Endothelial cell of umbilical vein (primary cell): ENCODE measurements at regions of chr10 and their contacts with region 1.

Region 1: DNA sequence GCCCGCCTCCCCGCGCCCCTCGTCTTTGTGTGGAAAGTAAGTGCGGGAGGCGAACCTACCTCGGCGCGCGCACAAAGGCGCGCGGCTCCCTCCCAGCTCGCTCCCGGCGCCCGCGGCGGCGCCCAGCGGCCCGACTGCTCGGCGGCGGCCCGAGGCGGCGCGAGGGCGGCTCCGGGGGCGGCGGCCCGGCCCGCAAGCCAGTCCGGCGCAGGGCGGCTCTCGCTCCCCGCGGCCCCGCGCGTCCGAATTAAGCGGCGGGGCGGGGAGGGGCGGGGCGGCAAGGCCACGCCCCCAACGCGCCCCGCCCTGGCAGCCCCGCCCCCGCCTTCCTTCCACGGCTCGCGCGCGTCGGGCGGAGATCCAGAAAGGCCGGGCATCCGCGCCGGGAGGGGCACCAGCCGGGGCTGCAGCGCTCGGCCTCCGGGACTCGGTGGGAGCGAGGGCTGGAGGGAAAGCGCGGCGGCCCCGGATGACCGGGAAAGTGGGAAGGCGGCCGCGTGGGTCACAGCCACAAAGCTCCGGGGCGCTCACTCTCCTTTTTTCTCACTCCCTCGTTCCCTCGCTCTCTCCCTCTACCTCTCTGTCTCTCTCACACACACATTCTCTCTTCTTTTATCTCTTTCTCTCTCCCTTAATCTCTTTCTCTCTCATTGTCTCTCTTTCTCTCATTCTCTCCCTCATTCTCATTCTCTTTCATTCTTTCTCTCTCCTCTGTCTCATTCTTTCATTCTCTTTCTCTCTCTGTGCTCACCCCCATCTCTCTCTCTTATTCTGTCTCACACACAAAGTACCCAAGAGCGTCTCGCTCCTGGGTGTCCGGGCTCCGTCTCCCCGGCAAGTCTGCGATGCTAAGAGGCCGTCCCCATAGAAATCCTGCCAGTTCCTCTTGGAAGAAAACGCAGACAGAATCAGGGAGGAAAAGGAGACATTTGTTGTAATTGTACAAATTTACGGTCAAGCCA is 170.2 kb downstream of the FAM107B start:
- DNase-seq: peak; percentile 71
- H3K4me3 ChIP-seq: peak overlapping the region; percentile 65 to 78 (median 76)
- H3K27ac ChIP-seq: peak overlapping the region; percentile 88
- H3K4me1 ChIP-seq: peaks cover 38% of the 10 kb centered on the region
- H3K27me3 ChIP-seq: no peaks in the 10 kb centered on the region
- CTCF ChIP-seq: no peak
- POLR2A ChIP-seq: peak; percentile 85

Region 2: DNA sequence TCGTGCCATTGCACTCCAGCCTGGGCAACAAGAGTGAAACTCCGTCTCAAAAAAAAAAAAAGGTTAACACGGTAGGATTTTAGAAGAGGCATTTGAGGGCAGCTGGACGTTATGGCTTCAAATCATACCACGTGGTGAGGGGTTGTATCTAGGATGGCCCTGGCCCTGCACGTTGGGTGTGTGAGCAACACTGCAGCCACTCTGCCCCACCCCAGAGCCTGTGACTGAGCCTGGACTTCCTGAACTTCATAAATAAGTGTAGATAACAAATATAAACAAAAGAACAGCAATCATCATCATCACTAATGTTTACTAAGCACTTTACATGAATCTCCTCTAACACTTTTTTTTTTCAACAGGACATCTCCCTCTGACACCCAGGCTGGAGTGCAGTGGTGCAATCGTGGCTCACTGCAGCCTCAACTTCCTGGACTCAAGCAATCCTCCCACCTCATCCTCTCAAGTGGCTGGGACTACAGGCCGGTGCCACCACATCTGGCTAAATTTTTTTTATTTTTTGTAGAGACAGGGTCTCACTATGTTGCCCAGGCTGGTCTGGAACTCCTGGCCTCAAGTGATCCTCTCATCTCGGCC is 104.2 kb before region 1 on chr10:
- CTCF ChIA-PET with region 1: interaction called, 3 read pairs
- POLR2A ChIA-PET with region 1: no interaction called
- dilution Hi-C with region 1: no loop called
- intact Hi-C with region 1: loop called (anchors 5 kb)
- DNase-seq: no peak
- H3K4me3 ChIP-seq: no peak overlapping the region
- H3K27ac ChIP-seq: no peak overlapping the region
- H3K4me1 ChIP-seq: no peaks in the 10 kb centered on the region
- H3K27me3 ChIP-seq: no peaks in the 10 kb centered on the region
- CTCF ChIP-seq: no peak
- POLR2A ChIP-seq: no peak

Region 3: GRCh38 chr10:14556285-14556956 is 48.0 kb before region 1 on chr10:
- CTCF ChIA-PET with region 1: interaction called, 3 read pairs
- POLR2A ChIA-PET with region 1: no interaction called
- dilution Hi-C with region 1: no loop called
- intact Hi-C with region 1: loop called (anchors 5 kb)
- DNase-seq: peak; percentile 59
- H3K4me3 ChIP-seq: no peak overlapping the region
- H3K27ac ChIP-seq: peak overlapping the region; percentile 16
- H3K4me1 ChIP-seq: peaks cover 62% of the 10 kb centered on the region
- H3K27me3 ChIP-seq: no peaks in the 10 kb centered on the region
- CTCF ChIP-seq: peak in 1 of 2 donors; percentile 22
- POLR2A ChIP-seq: peak; percentile 52

Region 4: DNA sequence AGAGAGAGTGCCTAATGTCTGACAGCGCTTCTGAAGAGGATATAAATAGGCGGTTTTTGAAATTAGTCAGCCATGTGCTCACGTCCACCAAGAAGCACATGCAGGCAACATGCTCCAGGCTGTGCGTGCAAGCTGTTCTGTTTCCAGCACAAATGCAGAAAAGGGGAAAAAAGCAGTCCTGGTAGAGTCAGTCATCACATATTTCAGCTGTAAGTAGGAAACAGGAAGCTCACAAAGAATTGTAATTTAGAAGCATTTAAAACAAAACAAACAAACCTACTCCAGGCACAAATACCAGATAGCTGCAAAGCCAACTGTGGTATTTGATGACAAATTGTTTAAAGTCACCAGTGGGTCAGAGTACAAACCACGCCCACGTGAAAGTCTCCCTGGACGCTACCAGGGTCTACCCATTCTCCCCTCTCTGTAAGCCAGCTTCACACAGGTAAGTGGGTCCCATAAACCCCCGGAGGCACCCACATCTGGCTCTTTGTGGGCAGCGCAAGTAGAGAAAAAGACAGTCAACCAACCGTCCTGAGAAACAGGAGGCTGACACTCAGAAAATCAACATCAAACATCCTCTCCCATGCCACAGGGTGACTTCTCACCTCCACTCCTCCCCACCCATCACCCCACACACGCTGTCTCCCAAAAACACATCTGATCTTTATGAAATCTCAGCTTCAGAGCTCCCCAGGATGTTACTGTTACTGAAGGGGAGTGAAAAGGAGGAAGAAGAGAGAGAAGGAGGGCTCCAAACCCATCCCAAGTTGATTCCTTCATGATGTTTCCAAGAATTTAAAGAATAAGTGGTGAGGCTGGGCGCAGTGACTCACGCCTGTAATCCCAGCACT is 16.2 kb before region 1 on chr10:
- CTCF ChIA-PET with region 1: interaction called, 4 read pairs
- POLR2A ChIA-PET with region 1: interaction called, 3 read pairs
- dilution Hi-C with region 1: no loop called
- intact Hi-C with region 1: loop called (anchors 1 kb)
- DNase-seq: peak; percentile 97
- H3K4me3 ChIP-seq: peak overlapping the region in 1 of 3 experiments; percentile 11
- H3K27ac ChIP-seq: peak overlapping the region; percentile 99
- H3K4me1 ChIP-seq: peaks cover 47% of the 10 kb centered on the region
- H3K27me3 ChIP-seq: no peaks in the 10 kb centered on the region
- CTCF ChIP-seq: no peak
- POLR2A ChIP-seq: no peak

Region 5: DNA sequence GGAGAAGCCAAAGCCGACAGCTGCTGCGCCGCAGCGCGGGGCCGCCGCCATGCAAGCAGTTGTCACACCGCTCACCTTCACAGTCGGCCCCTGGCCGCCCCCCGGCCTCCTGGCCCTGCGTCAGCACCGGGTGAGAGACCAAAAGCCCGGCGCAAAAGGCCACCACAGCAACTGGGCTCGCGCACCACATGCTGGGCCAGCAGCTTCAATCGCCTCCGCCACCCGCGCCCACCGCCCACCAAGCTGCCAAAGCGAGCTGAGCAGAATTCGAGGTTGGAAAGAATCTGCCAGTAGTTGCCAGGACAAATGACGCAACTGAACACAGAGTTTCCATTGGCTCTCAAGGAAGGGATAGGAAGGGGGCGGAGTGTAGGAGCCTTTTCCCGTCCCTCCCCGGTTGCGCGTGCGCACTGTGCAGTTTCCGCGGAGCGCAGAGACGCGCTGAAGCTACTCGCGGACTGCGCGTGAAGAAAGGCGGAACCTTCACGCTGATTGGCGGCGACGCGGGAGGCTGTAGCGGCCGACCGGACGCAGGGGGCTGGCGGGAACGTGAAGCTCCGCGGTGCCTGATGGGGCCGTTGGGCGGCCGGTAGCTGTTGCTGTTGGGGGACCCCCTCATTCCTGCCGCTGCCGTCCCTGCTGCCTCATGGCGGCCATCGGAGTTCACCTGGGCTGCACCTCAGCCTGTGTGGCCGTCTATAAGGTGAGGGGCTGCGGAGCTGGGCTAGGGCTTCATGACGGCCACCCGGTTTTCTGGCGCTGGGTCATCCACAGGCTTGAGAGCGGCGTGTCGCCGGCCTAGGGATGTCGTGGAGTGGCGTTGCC is 233.5 kb after region 1 on chr10 and contains the starts of genes CDNF, HSPA14 and MSANTD7:
- CTCF ChIA-PET with region 1: interaction called, 3 read pairs
- POLR2A ChIA-PET with region 1: no interaction called
- dilution Hi-C with region 1: no loop called
- intact Hi-C with region 1: loop called (anchors 2 kb)
- DNase-seq: peak; percentile 100
- H3K4me3 ChIP-seq: peak within 1 kb of the TSS; percentile 47 to 81 (median 71)
- H3K27ac ChIP-seq: peak within 1 kb of the TSS; percentile 74
- H3K4me1 ChIP-seq: peaks cover 11% of the 10 kb centered on the region
- H3K27me3 ChIP-seq: no peaks in the 10 kb centered on the region
- CTCF ChIP-seq: no peak
- POLR2A ChIP-seq: peak; percentile 92
- total RNA-seq, gene CDNF: 0.58 and 0.99 TPM in 2 replicates
- total RNA-seq, gene HSPA14: 15.7 and 18.0 TPM in 2 replicates
- total RNA-seq, gene MSANTD7: 13.1 and 13.6 TPM in 2 replicates

Region 6: GRCh38 chr10:14959276-14960057 is 355.0 kb after region 1 on chr10 and contains the start of gene MEIG1:
- CTCF ChIA-PET with region 1: no interaction called
- POLR2A ChIA-PET with region 1: no interaction called
- dilution Hi-C with region 1: no loop called
- intact Hi-C with region 1: loop called (anchors 10 kb)
- DNase-seq: peak; percentile 94
- H3K4me3 ChIP-seq: peak within 1 kb of the TSS; percentile 85 to 89 (median 86)
- H3K27ac ChIP-seq: peak within 1 kb of the TSS; percentile 84
- H3K4me1 ChIP-seq: peaks cover 9% of the 10 kb centered on the region
- H3K27me3 ChIP-seq: no peaks in the 10 kb centered on the region
- CTCF ChIP-seq: no peak
- POLR2A ChIP-seq: peak; percentile 44
- total RNA-seq, gene MEIG1: not detected in 2 replicates